Prostate gland (tissue), 2 donors: ENCODE measurements at regions of chr10 and their contacts with region 1.

Region 1: DNA sequence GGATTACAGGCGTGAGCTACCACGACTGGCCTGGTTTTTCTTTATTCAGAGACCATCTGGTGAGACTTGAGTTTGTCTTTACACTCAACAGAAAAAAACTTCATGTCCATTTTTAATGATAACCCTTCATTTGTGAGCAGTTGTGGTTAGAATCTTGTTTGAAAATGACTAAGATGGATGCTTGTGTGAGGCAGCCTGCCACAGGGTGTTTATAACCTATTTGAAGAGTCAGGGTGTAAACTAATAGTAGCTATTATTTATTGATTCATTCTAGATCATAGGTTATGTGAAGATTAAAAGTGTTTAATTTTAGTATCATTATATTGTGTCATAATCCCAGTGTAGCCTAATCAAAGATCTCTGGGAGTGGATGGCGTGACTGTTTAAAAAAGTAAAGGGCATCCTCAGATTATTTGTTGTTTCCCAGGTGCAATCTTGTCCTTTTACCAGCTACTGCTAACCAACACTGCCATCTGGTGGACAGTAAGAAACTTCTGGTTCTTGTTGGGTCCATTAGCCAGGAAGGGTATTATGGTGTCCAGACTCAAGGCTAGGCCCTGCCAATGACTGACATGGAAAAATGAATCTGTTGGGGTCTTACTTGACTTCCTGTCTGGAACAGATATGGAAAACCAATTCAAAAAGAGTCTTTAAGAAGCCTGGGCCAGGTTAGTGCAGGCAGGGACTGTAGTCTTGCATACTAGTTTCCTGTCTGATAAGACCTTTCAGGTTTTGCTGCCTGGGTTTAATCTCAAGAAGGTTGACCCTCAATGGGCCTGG is 24.9 kb downstream of the NRBF2 start:
- DNase-seq: peak; percentile 34
- H3K4me3 ChIP-seq: no peak overlapping the region
- H3K27ac ChIP-seq: no peak overlapping the region
- H3K4me1 ChIP-seq: no peaks in the 10 kb centered on the region
- H3K27me3 ChIP-seq: no peaks in the 10 kb centered on the region
- CTCF ChIP-seq: peak; percentile 67 to 81 (median 80)
- POLR2A ChIP-seq: no peak

Region 2: DNA sequence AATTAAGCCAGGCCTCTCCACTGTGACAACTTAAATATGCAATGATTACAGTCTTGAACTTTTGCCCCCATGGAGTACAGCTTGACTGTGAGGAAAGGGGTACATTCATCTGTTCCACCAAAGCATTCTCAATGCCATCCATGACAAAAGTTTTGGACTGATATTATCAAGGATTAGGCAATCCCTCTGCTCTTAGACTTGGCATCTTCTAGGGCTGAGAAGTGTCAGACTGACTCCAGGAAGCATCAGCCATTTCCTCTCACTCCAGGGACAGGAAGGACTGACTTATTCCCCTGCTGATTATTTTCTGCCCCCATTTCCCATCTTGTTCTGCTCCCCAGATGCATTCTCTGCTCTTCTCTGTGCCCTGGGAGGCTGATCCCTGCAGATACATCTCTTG is 714.2 kb before region 1 on chr10:
- intact Hi-C with region 1: loop called (anchors 5 kb)
- DNase-seq: no peak
- H3K4me3 ChIP-seq: no peak overlapping the region
- H3K27ac ChIP-seq: no peak overlapping the region
- H3K4me1 ChIP-seq: no peaks in the 10 kb centered on the region
- H3K27me3 ChIP-seq: no peaks in the 10 kb centered on the region
- CTCF ChIP-seq: no peak
- POLR2A ChIP-seq: no peak

Region 3: DNA sequence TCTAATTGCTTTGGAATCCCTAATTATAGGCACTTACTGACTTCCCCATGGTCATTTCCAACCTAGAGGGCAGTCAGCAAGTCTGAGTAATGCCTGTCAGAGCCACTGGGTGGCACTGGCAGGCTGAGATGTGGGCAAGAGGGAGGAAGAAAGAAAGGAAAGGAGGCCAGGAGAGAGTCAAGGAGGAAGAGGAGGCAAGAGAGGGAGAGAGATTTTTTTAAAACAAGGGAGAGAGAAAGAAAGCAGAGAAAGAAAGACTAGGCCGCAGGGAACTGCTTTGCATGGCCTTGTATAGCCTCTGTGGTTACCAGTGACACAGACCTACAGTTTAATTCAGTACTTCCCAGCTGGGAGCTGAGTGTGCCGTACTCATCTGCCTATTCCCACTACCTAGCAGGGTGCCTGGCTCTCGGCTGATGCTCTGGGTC is 563.9 kb before region 1 on chr10:
- intact Hi-C with region 1: loop called (anchors 5 kb)
- DNase-seq: peak; percentile 23
- H3K4me3 ChIP-seq: no peak overlapping the region
- H3K27ac ChIP-seq: no peak overlapping the region
- H3K4me1 ChIP-seq: no peaks in the 10 kb centered on the region
- H3K27me3 ChIP-seq: no peaks in the 10 kb centered on the region
- CTCF ChIP-seq: peak; percentile 35 to 85 (median 73)
- POLR2A ChIP-seq: no peak

Region 4: GRCh38 chr10:64023926-64024470 is 866.0 kb after region 1 on chr10:
- intact Hi-C with region 1: no loop called
- DNase-seq: no peak
- H3K4me3 ChIP-seq: no peak overlapping the region
- H3K27ac ChIP-seq: no peak overlapping the region
- H3K4me1 ChIP-seq: no peaks in the 10 kb centered on the region
- H3K27me3 ChIP-seq: no peaks in the 10 kb centered on the region
- CTCF ChIP-seq: no peak
- POLR2A ChIP-seq: no peak